ENCODE measurements at regions of chr1 and their contacts with region 1.

Region 1: GRCh38 chr1:6579374-6580118 is at the start of gene ZBTB48:
- DNase-seq: peak; percentile 86 to 98
- H3K4me3 ChIP-seq: peak within 1 kb of the TSS; percentile 78
- H3K27ac ChIP-seq: no peak within 1 kb of the TSS
- H3K4me1 ChIP-seq: peaks cover 8% of the 10 kb centered on the region
- H3K27me3 ChIP-seq: no peaks in the 10 kb centered on the region
- CTCF ChIP-seq: no peak
- total RNA-seq, gene ZBTB48: 17.2 and 25.5 TPM in 2 replicates

Region 2: GRCh38 chr1:5448486-5448885 is 1131.1 kb before region 1 on chr1:
- CTCF ChIA-PET with region 1: no interaction called
- POLR2A ChIA-PET with region 1: no interaction called
- intact Hi-C with region 1: no loop called
- DNase-seq: no peak
- H3K4me3 ChIP-seq: no peak overlapping the region
- H3K27ac ChIP-seq: no peak overlapping the region
- H3K4me1 ChIP-seq: no peaks in the 10 kb centered on the region
- H3K27me3 ChIP-seq: peaks cover 6% of the 10 kb centered on the region; the same call in 1 of the 2 replicates
- CTCF ChIP-seq: no peak; the same call in 1 of the 2 replicates

Region 3: GRCh38 chr1:5939271-5940170 is 640.0 kb before region 1 on chr1:
- CTCF ChIA-PET with region 1: no interaction called
- POLR2A ChIA-PET with region 1: interaction called, 24 read pairs
- intact Hi-C with region 1: no loop called
- DNase-seq: no peak
- H3K4me3 ChIP-seq: no peak overlapping the region
- H3K27ac ChIP-seq: no peak overlapping the region
- H3K4me1 ChIP-seq: no peaks in the 10 kb centered on the region
- H3K27me3 ChIP-seq: no peaks in the 10 kb centered on the region
- CTCF ChIP-seq: no peak

Region 4: DNA sequence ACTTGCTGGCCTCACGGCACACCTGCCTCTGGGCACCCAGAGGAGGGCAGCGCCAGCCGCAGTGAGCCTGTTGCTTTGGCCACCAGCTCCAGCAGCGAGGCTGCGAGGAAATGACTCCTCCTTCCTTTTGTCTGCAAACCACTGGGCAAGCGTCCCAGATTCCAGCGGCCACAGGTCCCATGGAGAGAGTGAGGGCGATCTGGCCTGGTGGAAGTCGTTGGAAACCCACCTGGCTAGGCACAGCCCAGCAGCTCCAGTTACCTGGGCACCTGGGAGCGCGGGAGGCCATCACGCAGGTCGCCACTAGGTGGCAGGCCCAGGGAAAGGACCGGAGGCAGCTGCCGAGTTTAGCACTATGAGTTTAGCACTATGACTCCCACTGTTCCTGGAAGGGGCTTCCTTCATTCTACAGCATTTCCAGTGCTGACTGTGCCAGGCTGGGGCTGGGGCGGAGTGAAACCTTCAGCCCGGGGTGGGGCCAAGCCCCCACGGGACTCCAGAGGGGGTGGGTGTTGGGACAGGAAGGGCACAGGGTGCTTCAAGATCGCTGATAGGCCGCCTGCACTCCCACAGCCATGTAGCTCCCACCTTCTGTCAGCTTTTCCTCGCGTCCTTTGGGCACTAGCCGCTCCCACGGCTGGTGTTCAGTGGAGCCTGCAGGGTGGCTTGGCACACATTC is 156.1 kb before region 1 on chr1:
- CTCF ChIA-PET with region 1: no interaction called
- POLR2A ChIA-PET with region 1: no interaction called
- intact Hi-C with region 1: no loop called
- DNase-seq: peak; percentile 80 to 94
- H3K4me3 ChIP-seq: no peak overlapping the region
- H3K27ac ChIP-seq: no peak overlapping the region
- H3K4me1 ChIP-seq: peaks cover 22% of the 10 kb centered on the region
- H3K27me3 ChIP-seq: peaks cover 8% of the 10 kb centered on the region; the same call in 1 of the 2 replicates
- CTCF ChIP-seq: peak; percentile 75

Region 5: GRCh38 chr1:6464514-6464836 is 115.1 kb before region 1 on chr1:
- CTCF ChIA-PET with region 1: interaction called, 10 read pairs
- POLR2A ChIA-PET with region 1: no interaction called
- intact Hi-C with region 1: no loop called
- DNase-seq: peak in 1 of 2 experiments; percentile 50
- H3K4me3 ChIP-seq: no peak overlapping the region
- H3K27ac ChIP-seq: no peak overlapping the region
- H3K4me1 ChIP-seq: no peaks in the 10 kb centered on the region
- H3K27me3 ChIP-seq: no peaks in the 10 kb centered on the region
- CTCF ChIP-seq: no peak

Region 6: GRCh38 chr1:6613361-6614018 is 33.9 kb after region 1 on chr1 and contains the start of gene PHF13:
- CTCF ChIA-PET with region 1: no interaction called
- POLR2A ChIA-PET with region 1: no interaction called
- intact Hi-C with region 1: no loop called
- DNase-seq: peak; percentile 87 to 99
- H3K4me3 ChIP-seq: peak within 1 kb of the TSS; percentile 64
- H3K27ac ChIP-seq: peak within 1 kb of the TSS; percentile 73
- H3K4me1 ChIP-seq: peaks cover 11% of the 10 kb centered on the region
- H3K27me3 ChIP-seq: no peaks in the 10 kb centered on the region
- CTCF ChIP-seq: no peak
- total RNA-seq, gene PHF13: 18.2 and 20.9 TPM in 2 replicates

Region 7: DNA sequence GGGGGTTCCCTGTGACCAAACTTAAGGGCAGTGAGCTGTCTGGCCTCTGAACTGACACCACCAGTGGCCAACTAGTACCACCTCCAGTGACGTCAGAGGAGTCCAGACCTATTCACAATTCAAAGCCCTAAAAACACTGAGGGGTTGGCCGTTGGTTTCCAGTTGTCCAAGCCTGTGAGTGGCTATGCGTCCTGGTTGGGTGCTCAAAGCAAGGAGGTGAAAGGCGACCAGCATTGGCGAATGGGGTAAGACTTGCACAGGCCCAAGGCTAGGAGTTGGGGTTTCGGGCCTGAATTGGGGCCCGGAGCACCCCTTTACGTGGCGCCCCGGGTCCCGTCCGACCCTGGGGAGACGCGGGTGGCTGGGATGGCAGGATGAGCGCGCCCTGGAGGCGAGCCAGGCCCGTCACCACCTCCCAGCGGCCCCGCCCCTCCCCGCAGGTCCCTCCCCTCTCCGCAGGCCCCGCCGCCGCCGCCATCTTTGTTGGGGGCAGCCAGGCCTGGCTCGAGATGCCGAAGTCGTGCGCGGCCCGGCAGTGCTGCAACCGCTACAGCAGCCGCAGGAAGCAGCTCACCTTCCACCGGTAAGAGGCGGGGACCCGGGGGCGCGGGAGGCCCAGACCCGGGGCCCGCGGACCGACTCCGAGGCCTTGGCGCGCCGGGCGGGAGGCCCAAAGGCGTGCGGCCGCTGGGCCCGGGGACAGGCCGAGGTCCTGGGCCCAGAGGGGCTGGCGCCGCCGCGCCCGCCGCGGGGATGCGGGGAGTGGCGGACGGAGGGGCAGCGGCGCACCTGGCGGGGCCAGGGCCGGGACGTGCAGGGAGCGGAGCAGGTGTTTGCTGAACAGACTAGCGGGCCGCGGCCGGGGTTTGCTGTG is 45.4 kb after region 1 on chr1 and contains the start of gene THAP3:
- CTCF ChIA-PET with region 1: no interaction called
- POLR2A ChIA-PET with region 1: interaction called, 18 read pairs
- intact Hi-C with region 1: loop called (anchors 1 kb)
- DNase-seq: peak; percentile 75 to 82
- H3K4me3 ChIP-seq: peak within 1 kb of the TSS; percentile 65
- H3K27ac ChIP-seq: 0 out of 2 replicates have a peak within 1 kb of the TSS, but pooled peaks have one; percentile 19
- H3K4me1 ChIP-seq: 0 out of 2 replicates have a peak, but pooled peaks cover 8% of the 10 kb centered on the region
- H3K27me3 ChIP-seq: no peaks in the 10 kb centered on the region
- CTCF ChIP-seq: no peak; the same call in 1 of the 2 replicates
- total RNA-seq, gene THAP3: 14.6 and 18.7 TPM in 2 replicates

Region 8: GRCh38 chr1:6646499-6647148 is 67.1 kb after region 1 on chr1:
- CTCF ChIA-PET with region 1: interaction called, 11 read pairs
- POLR2A ChIA-PET with region 1: no interaction called
- intact Hi-C with region 1: no loop called
- DNase-seq: peak; percentile 7 to 40
- H3K4me3 ChIP-seq: no peak overlapping the region
- H3K27ac ChIP-seq: no peak overlapping the region
- H3K4me1 ChIP-seq: no peaks in the 10 kb centered on the region
- H3K27me3 ChIP-seq: no peaks in the 10 kb centered on the region
- CTCF ChIP-seq: peak; percentile 64

Region 9: DNA sequence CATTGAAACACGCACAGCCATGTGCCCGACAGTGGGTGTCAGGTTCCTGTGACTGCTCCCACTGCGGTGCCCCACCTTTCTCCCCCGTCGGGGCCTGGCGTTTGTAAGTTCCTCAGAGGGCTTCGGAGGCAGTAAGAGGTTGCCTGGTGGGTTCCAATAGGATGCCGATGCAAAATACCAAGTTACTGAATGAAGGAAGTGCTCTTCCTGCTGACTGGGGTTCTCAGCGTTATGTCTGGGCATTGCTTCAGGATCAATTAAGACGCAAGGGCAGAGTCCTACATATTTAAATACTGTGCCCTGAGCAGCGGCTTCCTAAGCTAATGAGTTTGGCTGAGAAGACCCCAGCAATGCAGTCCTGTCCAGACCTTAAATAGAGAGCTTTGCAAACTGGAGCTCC is 150.9 kb after region 1 on chr1:
- CTCF ChIA-PET with region 1: no interaction called
- POLR2A ChIA-PET with region 1: no interaction called
- intact Hi-C with region 1: no loop called
- DNase-seq: no peak
- H3K4me3 ChIP-seq: no peak overlapping the region
- H3K27ac ChIP-seq: no peak overlapping the region
- H3K4me1 ChIP-seq: no peaks in the 10 kb centered on the region
- H3K27me3 ChIP-seq: peaks cover 9% of the 10 kb centered on the region
- CTCF ChIP-seq: no peak

Measured in PC-9 (cell line).